ENCODE measurements at regions of chr16 and their contacts with region 1.

Region 1: DNA sequence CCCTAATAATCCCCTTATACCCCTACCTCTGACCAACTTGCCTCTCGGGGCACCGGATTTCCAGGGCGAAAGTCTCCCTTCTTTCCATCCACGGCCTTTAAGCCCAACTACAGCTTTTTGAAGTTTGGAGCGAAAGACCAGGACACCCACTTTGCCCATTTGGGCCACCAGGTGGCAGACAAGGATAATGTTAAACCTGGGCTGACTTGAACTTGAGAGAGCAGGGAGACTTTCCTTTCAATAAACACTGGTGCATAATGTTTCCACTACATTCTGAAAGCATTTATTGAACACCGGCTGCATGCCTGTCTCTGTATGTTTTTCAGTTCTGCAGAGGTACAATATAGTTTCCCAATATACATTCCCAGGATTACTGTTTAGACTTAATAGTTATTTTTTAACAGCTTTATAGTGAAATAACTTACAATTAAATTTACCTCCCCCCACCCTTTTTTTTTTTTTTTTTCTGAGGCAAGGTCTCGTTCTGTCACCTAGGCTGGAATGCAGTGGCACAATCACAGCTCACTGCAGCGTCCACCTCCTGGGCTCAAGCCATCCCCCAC is 6.9 kb upstream of the CES3 start:
- DNase-seq: peak; percentile 81
- ATAC-seq: peak; percentile 82
- H3K4me3 ChIP-seq: no peak overlapping the region
- H3K27ac ChIP-seq: no peak overlapping the region
- H3K4me1 ChIP-seq: no peaks in the 10 kb centered on the region
- H3K27me3 ChIP-seq: no peaks in the 10 kb centered on the region
- CTCF ChIP-seq: peak; percentile 80

Region 2: DNA sequence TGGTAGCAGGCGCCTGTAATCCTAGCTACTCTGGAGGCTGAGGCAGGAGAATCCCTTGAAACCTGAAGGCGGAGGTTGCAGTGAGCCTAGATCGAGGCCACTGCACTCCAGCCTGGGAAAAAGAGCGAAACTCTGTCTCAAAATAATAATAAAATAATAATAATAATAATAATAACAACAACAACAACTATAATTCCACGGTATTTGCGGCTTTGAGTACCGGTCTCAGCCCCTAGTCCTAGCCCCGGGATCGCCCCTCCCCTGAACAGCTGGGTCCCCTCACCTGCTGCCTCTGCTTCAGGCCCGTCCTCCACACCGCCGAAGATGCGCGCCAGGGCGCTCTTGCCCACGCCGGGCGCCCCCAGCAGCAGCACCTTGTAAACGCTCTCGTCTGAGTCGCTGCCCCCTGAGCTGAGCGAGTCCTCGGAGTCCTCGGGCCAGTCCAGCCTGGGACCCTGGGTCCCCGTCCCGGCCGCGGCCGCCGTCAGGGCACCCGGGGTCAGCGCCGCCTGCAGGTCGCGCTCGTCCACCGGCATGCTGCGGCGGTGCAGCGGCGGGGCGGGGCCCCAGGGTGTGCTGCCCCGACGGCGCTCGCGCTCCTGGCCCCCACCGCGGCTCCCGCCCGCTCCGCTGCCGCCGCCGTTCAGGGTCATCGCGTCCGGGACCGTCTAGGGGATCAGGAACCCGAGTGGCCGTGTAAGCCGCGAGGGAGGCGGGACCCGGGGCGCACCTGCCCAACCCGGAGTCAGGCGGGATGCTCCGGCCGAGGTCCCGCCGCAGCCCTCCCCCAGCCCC is 29.5 kb before region 1 on chr16:
- CTCF ChIA-PET with region 1: no interaction called
- POLR2A ChIA-PET with region 1: no interaction called
- intact Hi-C with region 1: no loop called
- DNase-seq: peak; percentile 23
- ATAC-seq: peak; percentile 65
- H3K4me3 ChIP-seq: peak overlapping the region; percentile 61
- H3K27ac ChIP-seq: no peak overlapping the region
- H3K4me1 ChIP-seq: peaks cover 6% of the 10 kb centered on the region; the same call in 1 of the 2 replicates
- H3K27me3 ChIP-seq: peaks cover 13% of the 10 kb centered on the region
- CTCF ChIP-seq: peak; percentile 41; the same call in 1 of the 2 replicates

Region 3: GRCh38 chr16:67028555-67029248 is 74.5 kb after region 1 on chr16 and contains the start of gene CBFB:
- CTCF ChIA-PET with region 1: interaction called, 12 read pairs
- POLR2A ChIA-PET with region 1: no interaction called
- intact Hi-C with region 1: no loop called
- DNase-seq: peak; percentile 85
- ATAC-seq: peak; percentile 83
- H3K4me3 ChIP-seq: peak within 1 kb of the TSS; percentile 96
- H3K27ac ChIP-seq: peak within 1 kb of the TSS; percentile 64
- H3K4me1 ChIP-seq: peaks cover 8% of the 10 kb centered on the region
- H3K27me3 ChIP-seq: no peaks in the 10 kb centered on the region
- CTCF ChIP-seq: 0 out of 2 replicates have a peak, but pooled peaks have one; percentile 16
- total RNA-seq, gene CBFB: 50.6 and 103 TPM in 2 replicates

Region 4: GRCh38 chr16:67159593-67160406 is 205.6 kb after region 1 on chr16 and contains the starts of genes FBXL8 and TRADD:
- CTCF ChIA-PET with region 1: interaction called, 4 read pairs
- POLR2A ChIA-PET with region 1: no interaction called
- intact Hi-C with region 1: loop called (anchors 5 kb)
- DNase-seq: peak; percentile 70
- ATAC-seq: peak; percentile 66
- H3K4me3 ChIP-seq: peak within 1 kb of the TSS; percentile 95
- H3K27ac ChIP-seq: peak within 1 kb of the TSS; percentile 43; the same call in 1 of the 2 replicates
- H3K4me1 ChIP-seq: peaks cover 21% of the 10 kb centered on the region
- H3K27me3 ChIP-seq: no peaks in the 10 kb centered on the region
- CTCF ChIP-seq: peak; percentile 59
- total RNA-seq, gene FBXL8: 8.7 and 13.1 TPM in 2 replicates
- total RNA-seq, gene TRADD: 19.4 and 26.6 TPM in 2 replicates

Region 5: DNA sequence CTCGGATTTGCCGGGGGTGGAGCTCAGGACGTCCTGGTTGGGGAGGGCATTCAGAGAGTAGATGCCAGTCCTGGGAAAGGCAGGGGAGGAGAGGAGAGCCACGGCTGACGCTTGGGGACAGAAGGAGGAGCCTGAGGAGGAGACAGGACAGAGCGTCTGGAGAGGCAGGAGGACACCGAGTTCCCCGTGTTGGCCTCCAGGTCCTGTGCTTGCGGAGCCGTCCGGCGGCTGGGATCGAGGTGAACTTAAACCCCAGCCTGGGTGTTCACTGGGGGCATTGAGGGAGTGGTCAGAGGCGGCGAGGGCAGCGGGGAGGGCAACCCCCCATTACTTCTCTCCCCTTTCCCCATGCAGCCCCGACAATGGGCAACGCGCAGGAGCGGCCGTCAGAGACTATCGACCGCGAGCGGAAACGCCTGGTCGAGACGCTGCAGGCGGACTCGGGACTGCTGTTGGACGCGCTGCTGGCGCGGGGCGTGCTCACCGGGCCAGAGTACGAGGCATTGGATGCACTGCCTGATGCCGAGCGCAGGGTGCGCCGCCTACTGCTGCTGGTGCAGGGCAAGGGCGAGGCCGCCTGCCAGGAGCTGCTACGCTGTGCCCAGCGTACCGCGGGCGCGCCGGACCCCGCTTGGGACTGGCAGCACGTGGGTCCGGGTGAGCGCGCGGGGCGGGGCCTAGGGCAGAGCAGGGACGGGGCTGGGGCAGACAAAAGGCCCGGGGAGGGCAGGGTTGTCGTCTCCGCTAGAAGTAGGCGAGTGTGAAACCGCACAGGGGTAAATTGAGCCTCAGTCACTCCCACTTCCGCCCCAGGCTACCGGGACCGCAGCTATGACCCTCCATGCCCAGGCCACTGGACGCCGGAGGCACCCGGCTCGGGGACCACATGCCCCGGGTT is 219.9 kb after region 1 on chr16:
- CTCF ChIA-PET with region 1: interaction called, 24 read pairs
- POLR2A ChIA-PET with region 1: no interaction called
- intact Hi-C with region 1: no loop called
- DNase-seq: peak; percentile 87
- ATAC-seq: peak; percentile 67
- H3K4me3 ChIP-seq: peak overlapping the region; percentile 71
- H3K27ac ChIP-seq: peak overlapping the region; percentile 69
- H3K4me1 ChIP-seq: peaks cover 51% of the 10 kb centered on the region
- H3K27me3 ChIP-seq: no peaks in the 10 kb centered on the region
- CTCF ChIP-seq: peak; percentile 16; the same call in 1 of the 2 replicates

Region 6: GRCh38 chr16:67183627-67184328 is 229.6 kb after region 1 on chr16 and contains the start of gene MATCAP1:
- CTCF ChIA-PET with region 1: no interaction called
- POLR2A ChIA-PET with region 1: no interaction called
- intact Hi-C with region 1: loop called (anchors 1 kb)
- DNase-seq: peak; percentile 93
- ATAC-seq: peak; percentile 75
- H3K4me3 ChIP-seq: peak within 1 kb of the TSS; percentile 79
- H3K27ac ChIP-seq: peak within 1 kb of the TSS; percentile 85
- H3K4me1 ChIP-seq: peaks cover 41% of the 10 kb centered on the region
- H3K27me3 ChIP-seq: no peaks in the 10 kb centered on the region
- CTCF ChIP-seq: no peak
- total RNA-seq, gene MATCAP1: 22.6 and 29.6 TPM in 2 replicates

Measured in PC-3 (cell line).